Thyroid gland (tissue), 4 donors: ENCODE measurements at regions of chr11 and their contacts with region 1.

Region 1: DNA sequence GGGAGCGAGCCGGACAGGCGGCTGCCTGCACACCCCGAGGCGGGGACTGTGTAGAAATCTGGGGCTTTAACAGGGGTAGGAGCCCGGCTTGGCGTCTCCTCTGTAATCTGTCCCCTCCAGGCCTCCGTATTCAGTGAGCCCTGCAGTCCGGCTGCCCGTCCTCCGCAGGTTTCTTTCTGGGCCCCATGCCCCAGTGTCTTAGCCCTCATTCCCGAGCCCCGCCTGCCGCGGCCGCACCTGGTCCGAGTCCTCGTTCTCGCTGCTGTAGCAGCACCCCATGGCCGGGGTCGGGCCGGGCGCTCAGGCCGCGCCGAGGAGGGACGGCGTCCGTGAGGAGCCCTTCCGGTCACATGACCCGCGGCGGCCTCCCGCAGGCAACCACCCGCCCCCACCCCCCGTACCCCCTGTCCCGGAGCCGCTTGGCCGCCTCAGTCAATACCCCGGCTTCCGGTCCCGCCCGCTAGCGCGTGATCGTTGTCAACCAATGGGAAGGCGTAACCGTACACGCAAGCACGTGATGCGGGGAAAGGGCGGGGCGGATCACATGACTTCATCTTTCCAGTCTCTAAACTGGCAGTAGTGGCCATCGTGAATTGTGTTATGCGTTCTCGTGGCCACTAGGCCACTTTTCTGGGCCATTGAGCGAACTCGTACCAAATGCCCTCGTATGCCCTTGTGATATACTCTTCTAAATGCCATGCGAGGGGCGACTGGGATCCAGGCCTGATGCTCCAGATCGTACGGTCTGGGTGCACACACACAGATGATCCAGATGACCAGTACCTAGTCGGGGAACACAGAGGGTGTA is at the start of gene LAMTOR1:
- DNase-seq: peak; percentile 100
- H3K4me3 ChIP-seq: peak within 1 kb of the TSS; percentile 56 to 99 (median 76)
- H3K27ac ChIP-seq: peak within 1 kb of the TSS; percentile 92 to 98 (median 96)
- H3K4me1 ChIP-seq: peaks cover 14 to 34% of the 10 kb centered on the region in 2 donors
- H3K27me3 ChIP-seq: no peaks in the 10 kb centered on the region
- CTCF ChIP-seq: peak in 4 of 6 experiments; percentile 31 to 67 (median 56)
- POLR2A ChIP-seq: peak; percentile 56 to 82
- total RNA-seq, gene LAMTOR1: 127 to 204 (median 182) TPM

Region 2: GRCh38 chr11:72222907-72223614 is 119.9 kb after region 1 on chr11:
- intact Hi-C with region 1: loop called (anchors 10 kb)
- DNase-seq: peak; percentile 98
- H3K4me3 ChIP-seq: peak overlapping the region; percentile 63 to 84 (median 74)
- H3K27ac ChIP-seq: peak overlapping the region; percentile 86 to 99 (median 91)
- H3K4me1 ChIP-seq: peaks cover 27 to 29% of the 10 kb centered on the region in 2 donors
- H3K27me3 ChIP-seq: no peaks in the 10 kb centered on the region
- CTCF ChIP-seq: peak in 1 of 6 experiments; percentile 39
- POLR2A ChIP-seq: peak; percentile 17 to 83

Region 3: DNA sequence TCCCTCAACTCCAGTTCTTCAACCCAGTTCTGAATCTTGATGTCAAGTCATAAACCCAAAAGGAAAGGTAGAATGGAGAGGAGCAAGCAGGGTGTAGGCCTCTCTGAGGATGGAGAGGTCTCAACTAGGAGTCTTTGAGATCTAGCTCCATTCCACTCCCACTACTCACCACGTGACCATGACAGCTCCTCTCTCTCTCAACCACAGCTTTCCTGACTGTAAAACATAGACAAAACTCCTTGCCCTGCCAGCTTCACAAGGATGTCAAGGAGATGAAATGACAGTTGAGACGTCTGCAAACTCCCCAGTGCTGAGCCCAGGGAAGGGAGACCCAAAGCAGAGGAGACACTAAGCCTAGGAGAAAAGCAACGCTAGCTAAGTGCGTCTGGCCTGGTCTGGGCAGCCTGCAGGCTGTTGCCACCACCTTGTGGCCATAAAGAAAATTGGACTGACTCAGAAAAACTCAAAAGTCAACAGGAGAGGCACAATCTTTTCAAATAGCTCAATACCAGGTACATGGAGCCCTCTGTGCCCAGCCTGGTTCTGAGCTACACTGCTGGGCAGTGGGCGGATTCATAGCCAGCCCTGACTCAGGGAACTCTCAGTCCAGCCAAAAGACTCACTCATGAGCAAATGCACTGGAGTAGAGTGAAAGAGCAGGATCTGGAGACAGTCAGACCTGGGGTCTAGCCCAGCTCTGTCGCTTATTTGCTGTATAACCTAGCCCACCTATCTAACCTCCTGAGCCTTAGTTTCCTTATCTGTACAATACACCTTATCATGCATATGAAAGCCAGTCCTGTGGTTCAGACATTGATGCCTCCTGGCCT is 327.8 kb after region 1 on chr11:
- intact Hi-C with region 1: loop called (anchors 10 kb)
- DNase-seq: peak; percentile 42 to 45
- H3K4me3 ChIP-seq: no peak overlapping the region
- H3K27ac ChIP-seq: no peak overlapping the region
- H3K4me1 ChIP-seq: peaks cover 16 to 17% of the 10 kb centered on the region in 2 donors
- H3K27me3 ChIP-seq: no peaks in the 10 kb centered on the region
- CTCF ChIP-seq: peak; percentile 63 to 83 (median 77)
- POLR2A ChIP-seq: no peak